Stomach (tissue), 19 donors: ENCODE measurements at regions of chr11 and their contacts with region 1.

Region 1: DNA sequence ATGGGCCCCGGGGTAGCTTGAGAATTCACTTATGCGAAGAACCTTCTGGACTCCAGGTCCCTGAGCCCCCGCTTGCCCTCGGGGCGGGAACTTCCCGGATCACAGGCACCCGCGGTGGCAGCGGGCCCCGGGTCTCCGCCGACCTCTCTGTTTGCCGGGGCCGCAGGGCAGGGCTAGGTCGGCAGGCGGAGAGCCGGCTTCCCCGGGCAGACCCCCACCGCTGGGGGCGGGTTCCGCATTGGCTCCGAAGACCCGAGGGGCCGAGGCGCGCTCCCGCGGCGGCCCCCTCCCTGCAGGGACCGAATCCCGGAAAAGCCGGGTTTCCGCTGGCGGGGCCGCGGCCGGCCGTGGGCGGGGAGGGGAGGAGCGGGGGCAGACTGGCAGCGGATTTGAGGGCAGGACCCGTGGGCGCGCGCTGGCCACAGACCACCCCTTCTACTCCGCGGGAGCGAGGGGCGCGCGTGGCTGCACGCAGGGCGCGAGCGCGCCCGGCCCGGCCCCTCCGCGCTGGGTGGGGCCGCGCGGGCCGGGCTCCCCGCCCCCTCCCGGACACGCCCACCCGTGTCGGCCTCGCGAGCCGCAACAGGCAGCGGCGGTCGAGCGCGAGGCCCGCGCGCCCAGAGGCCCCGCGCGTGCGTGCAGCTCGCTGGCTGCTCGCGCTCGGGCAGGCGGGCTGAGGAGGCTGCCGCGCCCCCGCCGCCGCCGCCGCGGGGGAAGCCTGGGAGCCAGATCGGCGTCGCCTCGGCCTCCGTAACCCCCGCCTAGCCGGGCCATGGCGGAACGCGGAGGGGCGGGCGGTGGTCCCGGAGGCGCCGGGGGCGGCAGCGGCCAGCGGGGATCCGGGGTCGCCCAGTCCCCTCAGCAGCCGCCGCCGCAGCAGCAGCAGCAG is at the start of gene PACS1:
- DNase-seq: peak; percentile 76 to 92
- H3K4me3 ChIP-seq: peak within 1 kb of the TSS; percentile 75 to 99 (median 96)
- H3K27ac ChIP-seq: peak within 1 kb of the TSS; percentile 90 to 99 (median 95)
- H3K4me1 ChIP-seq: peaks cover 28 to 57% (median 54%) of the 10 kb centered on the region in 4 donors
- H3K27me3 ChIP-seq: no peaks in the 10 kb centered on the region
- CTCF ChIP-seq: no peak
- EP300 ChIP-seq: no peak
- POLR2A ChIP-seq: no peak
- total RNA-seq, gene PACS1: 47.0 to 269 (median 57.4) TPM

Region 2: DNA sequence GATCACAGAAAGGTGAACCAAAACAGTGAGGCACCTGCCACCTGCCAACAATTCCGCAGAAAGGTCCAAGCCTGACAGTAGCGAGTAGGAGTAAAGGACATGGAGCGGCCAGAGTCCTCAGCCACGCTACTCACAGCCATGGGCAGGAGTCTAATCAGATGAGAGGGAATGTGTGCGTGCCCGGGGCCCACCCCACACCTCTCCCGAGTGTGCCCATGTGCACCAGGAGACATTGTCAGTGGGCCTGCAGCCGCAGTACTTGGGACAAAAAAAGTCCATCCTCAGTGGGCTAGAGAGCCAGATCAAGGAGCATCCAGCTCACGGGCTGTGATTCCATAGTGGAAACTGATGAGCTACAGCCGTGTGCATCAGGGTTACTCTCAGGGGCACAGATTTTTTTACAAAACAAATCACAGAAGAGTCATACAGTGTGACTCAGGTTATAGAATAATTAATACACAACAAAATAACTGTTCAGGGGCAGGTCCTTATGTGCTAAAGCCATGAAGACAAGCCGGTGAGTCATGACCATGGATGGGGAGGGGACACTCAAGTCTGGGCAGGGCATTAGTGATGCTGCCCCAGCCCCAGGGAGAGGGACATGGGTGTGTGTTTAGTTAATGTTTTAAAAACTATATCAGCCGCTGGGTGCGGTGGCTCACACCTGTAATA is 96.4 kb before region 1 on chr11:
- intact Hi-C with region 1: no loop called
- DNase-seq: no peak
- H3K4me3 ChIP-seq: no peak overlapping the region
- H3K27ac ChIP-seq: no peak overlapping the region
- H3K4me1 ChIP-seq: peaks cover 0 to 11% (median 0%) of the 10 kb centered on the region in 4 donors
- H3K27me3 ChIP-seq: no peaks in the 10 kb centered on the region
- CTCF ChIP-seq: no peak
- EP300 ChIP-seq: no peak
- POLR2A ChIP-seq: no peak

Region 3: DNA sequence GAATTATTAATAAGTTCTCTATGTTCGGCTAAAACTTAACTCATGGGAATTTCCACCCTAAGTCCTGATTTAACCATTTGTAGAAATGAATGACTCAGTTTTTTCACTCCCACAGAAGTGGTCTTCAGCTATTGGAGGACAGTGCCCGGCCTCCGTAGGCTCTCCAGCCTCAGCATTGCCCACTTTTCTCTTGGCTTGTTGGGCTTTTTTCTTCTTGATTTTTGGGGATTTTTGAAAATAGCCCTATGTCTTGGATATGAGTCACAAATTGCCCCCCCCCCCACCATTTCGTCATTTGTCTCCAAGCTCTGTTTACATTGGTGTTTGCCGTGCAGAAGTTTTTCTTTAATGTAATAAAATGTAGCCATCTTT is 66.8 kb after region 1 on chr11:
- intact Hi-C with region 1: loop called (anchors 10 kb)
- DNase-seq: no peak
- H3K4me3 ChIP-seq: no peak overlapping the region
- H3K27ac ChIP-seq: peak overlapping the region in 2 of 5 donors; percentile 15 to 24
- H3K4me1 ChIP-seq: peaks cover under 1 to 39% (median 15%) of the 10 kb centered on the region in 4 donors
- H3K27me3 ChIP-seq: no peaks in the 10 kb centered on the region
- CTCF ChIP-seq: no peak
- EP300 ChIP-seq: no peak
- POLR2A ChIP-seq: no peak